ENCODE measurements at regions of chr5 and their contacts with region 1.

Region 1: DNA sequence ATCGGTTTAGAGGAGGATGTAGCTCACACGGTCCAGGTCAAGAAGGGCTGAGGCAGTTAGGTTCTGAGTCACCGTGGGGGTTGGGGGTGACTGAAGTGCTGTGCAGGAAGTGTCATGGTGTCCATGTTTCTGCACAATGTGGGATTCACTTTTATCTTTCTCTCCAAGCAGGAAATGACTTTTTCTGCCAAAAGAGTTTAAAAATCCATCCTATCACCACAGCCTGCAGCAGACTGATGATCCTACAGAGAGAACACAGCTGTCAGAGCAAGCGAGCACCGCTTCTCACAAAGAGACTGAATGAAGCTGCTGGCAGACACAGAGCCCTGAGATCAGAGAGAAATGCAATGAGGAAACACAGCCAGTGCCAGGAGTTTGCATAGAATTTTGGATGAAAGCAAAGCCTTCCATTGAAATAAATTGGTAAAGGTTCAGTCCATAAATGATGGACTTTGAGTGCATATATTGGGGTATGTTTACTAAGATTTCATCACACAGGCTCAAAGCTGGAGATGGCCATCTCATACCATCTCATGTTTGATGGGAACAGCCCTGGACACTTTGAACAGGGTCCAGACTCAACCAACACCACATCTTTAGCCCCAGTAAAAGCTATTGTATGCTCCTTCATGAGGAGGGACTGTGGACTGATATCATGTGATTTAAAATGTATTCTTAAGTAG is 213.9 kb upstream of the FBXL7 start:
- DNase-seq: no peak
- H3K4me3 ChIP-seq: no peak overlapping the region
- H3K27ac ChIP-seq: no peak overlapping the region
- H3K4me1 ChIP-seq: no peaks in the 10 kb centered on the region
- H3K27me3 ChIP-seq: no peaks in the 10 kb centered on the region
- CTCF ChIP-seq: no peak

Region 2: GRCh38 chr5:15080219-15080618 is 205.8 kb before region 1 on chr5:
- intact Hi-C with region 1: no loop called
- DNase-seq: no peak
- H3K4me3 ChIP-seq: no peak overlapping the region
- H3K27ac ChIP-seq: peak overlapping the region; percentile 67 to 78
- H3K4me1 ChIP-seq: peaks cover 3 to 22% of the 10 kb centered on the region in 2 donors
- H3K27me3 ChIP-seq: no peaks in the 10 kb centered on the region
- CTCF ChIP-seq: no peak

Region 3: GRCh38 chr5:15215056-15215455 is 71.0 kb before region 1 on chr5:
- intact Hi-C with region 1: no loop called
- DNase-seq: no peak
- H3K4me3 ChIP-seq: no peak overlapping the region
- H3K27ac ChIP-seq: no peak overlapping the region
- H3K4me1 ChIP-seq: no peaks in the 10 kb centered on the region
- H3K27me3 ChIP-seq: no peaks in the 10 kb centered on the region
- CTCF ChIP-seq: no peak

Region 4: GRCh38 chr5:15995341-15996052 is 709.5 kb after region 1 on chr5:
- intact Hi-C with region 1: loop called (anchors 10 kb)
- DNase-seq: no peak
- H3K4me3 ChIP-seq: no peak overlapping the region
- H3K27ac ChIP-seq: no peak overlapping the region
- H3K4me1 ChIP-seq: no peaks in the 10 kb centered on the region
- H3K27me3 ChIP-seq: no peaks in the 10 kb centered on the region
- CTCF ChIP-seq: peak in 2 of 3 experiments; percentile 16 to 41

Measured in ascending aorta (tissue), 2 donors.